Activated naive CD4-positive, alpha-beta T cell treated with anti-CD3 and anti-CD28 coated beads, Interleukin-2, amount 10 ng/mL, durations not matched to agents 7 days and 5 days (primary cell): ENCODE measurements at regions of chr12 and their contacts with region 1.

Region 1: GRCh38 chr12:54431911-54432814 is 13.1 kb upstream of the ITGA5 start:
- DNase-seq: peak; percentile 44
- H3K4me3 Mint-ChIP-seq: peak overlapping the region; percentile 42
- H3K27ac Mint-ChIP-seq: peak overlapping the region; percentile 4
- H3K4me1 Mint-ChIP-seq: peaks cover 48% of the 10 kb centered on the region
- H3K27me3 Mint-ChIP-seq: peaks cover 57% of the 10 kb centered on the region

Region 2: DNA sequence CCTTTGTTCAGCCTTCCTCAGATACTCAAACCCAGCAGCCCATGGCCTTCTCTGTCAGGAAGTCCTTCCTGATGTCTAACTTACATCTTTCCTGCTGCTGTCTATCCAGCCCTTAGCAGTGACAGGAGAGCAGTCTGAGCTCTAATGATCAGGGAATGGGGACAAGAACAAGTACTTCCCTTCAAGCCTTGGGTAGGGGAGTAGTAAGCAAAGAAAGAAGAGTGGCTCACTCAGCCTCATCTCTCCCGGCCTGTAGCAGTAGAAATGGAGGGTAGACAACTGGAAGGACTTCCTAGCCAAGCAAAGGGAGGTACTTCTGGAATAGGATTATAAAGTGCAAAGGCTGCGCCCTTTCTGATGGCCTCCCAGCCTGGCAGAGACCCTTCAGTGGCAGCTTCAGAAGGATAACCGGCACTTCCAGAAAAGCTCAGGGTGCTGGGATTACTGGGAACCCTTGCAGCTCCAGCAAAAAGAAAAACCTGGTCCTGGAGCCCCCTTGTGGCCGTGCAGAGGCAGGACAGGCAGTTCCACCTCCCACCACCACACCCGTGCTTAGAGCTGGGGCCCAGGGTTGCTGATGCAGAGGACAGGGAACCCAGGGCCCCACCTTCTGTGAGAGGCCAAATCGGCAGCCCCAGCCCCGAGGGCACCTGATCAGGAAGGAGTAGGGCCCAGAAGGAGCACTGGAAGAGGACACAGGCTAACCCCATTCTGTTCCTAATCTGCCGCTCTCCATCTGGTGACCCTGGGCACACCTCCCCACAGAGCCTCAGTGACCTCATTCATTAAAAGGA is 231.0 kb before region 1 on chr12:
- CTCF ChIA-PET with region 1: no interaction called
- DNase-seq: peak; percentile 77
- H3K4me3 Mint-ChIP-seq: no peak overlapping the region
- H3K27ac Mint-ChIP-seq: no peak overlapping the region
- H3K4me1 Mint-ChIP-seq: no peaks in the 10 kb centered on the region
- H3K27me3 Mint-ChIP-seq: peaks cover 90% of the 10 kb centered on the region

Region 3: GRCh38 chr12:54404061-54405004 is 27.8 kb before region 1 on chr12:
- CTCF ChIA-PET with region 1: interaction called, 519 read pairs
- DNase-seq: peak; percentile 77
- H3K4me3 Mint-ChIP-seq: no peak overlapping the region
- H3K27ac Mint-ChIP-seq: no peak overlapping the region
- H3K4me1 Mint-ChIP-seq: peaks cover 19% of the 10 kb centered on the region
- H3K27me3 Mint-ChIP-seq: no peaks in the 10 kb centered on the region

Region 4: DNA sequence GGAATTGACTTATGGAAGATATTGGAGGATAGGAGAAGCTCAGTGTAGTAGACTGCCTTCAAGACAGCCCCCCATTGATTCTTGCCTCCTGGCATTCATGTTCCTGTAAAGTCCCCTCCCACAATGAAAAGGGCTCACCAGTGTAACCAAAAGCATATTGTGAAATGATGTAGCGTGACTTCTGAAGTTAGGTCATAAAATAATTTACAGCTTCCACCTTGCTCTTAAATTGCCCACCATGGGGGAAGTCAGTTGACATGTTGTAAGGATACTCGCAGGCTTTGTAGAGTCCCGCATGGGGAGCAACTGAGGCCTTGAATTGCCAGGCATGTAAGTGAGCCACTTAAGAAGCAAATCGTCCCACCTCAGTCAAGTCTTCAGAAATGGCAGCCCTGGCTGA is 16.2 kb after region 1 on chr12:
- CTCF ChIA-PET with region 1: no interaction called
- DNase-seq: no peak
- H3K4me3 Mint-ChIP-seq: no peak overlapping the region
- H3K27ac Mint-ChIP-seq: no peak overlapping the region
- H3K4me1 Mint-ChIP-seq: no peaks in the 10 kb centered on the region
- H3K27me3 Mint-ChIP-seq: peaks cover 36% of the 10 kb centered on the region